H1 (cell line): ENCODE measurements at regions of chr17 and their contacts with region 1.

Region 1: DNA sequence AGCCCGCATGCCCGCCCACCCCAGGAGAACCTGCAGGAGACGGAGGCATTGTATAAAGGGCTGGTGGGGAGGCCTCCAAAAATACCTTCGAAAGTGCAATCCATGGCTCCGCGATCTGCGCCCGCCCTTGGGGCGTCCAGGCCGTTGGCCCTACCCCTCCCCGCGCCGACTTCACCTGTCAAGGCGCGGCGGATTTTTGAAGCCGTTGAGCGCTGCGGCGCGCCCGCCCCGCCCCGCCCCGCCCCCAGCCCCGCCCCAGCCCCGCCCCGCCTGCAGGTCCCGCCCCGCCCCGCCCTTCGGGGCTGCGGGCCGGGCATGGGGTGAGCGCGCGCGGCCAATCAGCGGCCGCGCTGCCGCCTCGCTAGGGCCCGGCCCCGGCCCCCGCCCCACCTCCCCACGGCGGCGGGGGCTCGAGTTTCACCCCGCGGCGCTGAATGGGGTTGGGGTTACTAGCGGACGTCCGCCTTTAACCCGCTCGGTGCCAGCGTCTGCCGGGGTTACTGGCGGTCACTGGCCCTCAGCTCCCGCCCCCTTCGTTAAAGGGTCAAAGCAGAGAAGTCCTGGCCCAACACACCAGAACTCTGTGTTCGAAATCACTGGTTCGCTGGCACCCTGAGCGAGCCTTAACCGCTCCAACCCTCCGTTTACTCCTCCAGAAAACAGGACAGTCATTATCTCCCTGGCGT is 13.2 kb downstream of the SREBF1 start:
- DNase-seq: peak in 1 of 2 experiments; percentile 93
- H3K4me3 ChIP-seq: peak overlapping the region in 3 of 4 experiments; percentile 29 to 51 (median 38); a peak in 7 of 8 replicates
- H3K27ac ChIP-seq: peak overlapping the region; percentile 78
- H3K4me1 ChIP-seq: peaks cover 13 to 37% (median 27%) of the 10 kb centered on the region in 4 experiments
- H3K27me3 ChIP-seq: no peaks in the 10 kb centered on the region; a peak in 1 of 7 replicates
- CTCF ChIP-seq: no peak
- EP300 ChIP-seq: peak in 1 of 2 experiments; percentile 87; a peak in 2 of 3 replicates
- POLR2A ChIP-seq: no peak
- RAD21 ChIP-seq: no peak

Region 2: DNA sequence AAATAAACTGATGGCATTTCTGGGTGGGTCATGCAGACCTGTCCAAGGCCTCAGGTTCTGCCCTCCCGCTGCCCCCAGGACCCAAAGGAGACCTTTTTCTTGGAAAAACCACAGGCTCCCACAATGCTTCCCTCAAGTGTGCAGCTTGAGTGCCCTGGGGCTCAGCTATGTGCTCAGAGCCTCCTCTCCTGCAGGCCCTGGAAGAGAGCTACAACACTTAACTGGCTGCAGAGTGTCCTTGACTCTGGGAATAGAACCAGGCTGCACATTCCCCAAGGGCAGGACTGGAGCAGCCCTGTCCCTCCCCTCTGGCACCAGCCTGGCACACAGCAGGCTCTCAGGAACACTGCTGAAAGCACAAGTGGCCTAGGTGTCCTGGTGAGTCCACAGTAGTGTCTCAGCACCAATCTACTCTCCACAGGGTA is 18.0 kb after region 1 on chr17:
- CTCF ChIA-PET with region 1: interaction called, 66 read pairs
- POLR2A ChIA-PET with region 1: interaction called, 532 read pairs
- DNase-seq: no peak
- H3K4me3 ChIP-seq: no peak overlapping the region
- H3K27ac ChIP-seq: no peak overlapping the region
- H3K4me1 ChIP-seq: peaks cover 19 to 44% (median 34%) of the 10 kb centered on the region in 4 experiments
- H3K27me3 ChIP-seq: no peaks in the 10 kb centered on the region; a peak in 1 of 7 replicates
- CTCF ChIP-seq: no peak
- EP300 ChIP-seq: no peak
- POLR2A ChIP-seq: no peak
- RAD21 ChIP-seq: no peak

Region 3: GRCh38 chr17:17849845-17850373 is 26.3 kb after region 1 on chr17:
- CTCF ChIA-PET with region 1: interaction called, 375 read pairs
- POLR2A ChIA-PET with region 1: interaction called, 44 read pairs
- DNase-seq: no peak
- H3K4me3 ChIP-seq: no peak overlapping the region
- H3K27ac ChIP-seq: no peak overlapping the region
- H3K4me1 ChIP-seq: peaks cover 0 to 30% (median 19%) of the 10 kb centered on the region in 4 experiments; a peak in 6 of 7 replicates
- H3K27me3 ChIP-seq: no peaks in the 10 kb centered on the region; a peak in 1 of 7 replicates
- CTCF ChIP-seq: no peak
- EP300 ChIP-seq: no peak
- POLR2A ChIP-seq: no peak
- RAD21 ChIP-seq: no peak